ENCODE measurements at regions of chr17 and their contacts with region 1.

Region 1: DNA sequence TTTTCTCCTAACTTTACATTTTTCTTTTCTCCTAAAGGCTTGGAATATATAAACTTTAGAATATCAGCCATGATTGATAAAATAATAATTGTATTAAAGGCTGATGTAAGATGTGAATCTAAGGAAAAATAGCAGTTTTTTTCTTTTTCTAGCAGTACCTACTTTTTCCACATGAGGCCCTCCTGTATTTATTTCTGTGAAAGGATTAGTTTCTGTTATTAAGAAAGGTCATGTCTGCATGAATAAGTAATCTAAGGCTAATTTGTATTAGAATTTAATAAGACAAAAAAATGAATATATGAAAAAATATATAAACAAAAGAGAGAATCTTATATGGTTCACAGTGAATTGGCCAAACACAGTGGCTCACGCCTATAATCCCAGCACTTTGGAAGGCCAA is 85.3 kb downstream of the STXBP4 start:
- DNase-seq: no peak
- H3K4me3 ChIP-seq: no peak overlapping the region
- H3K27ac ChIP-seq: no peak overlapping the region
- H3K4me1 ChIP-seq: no peaks in the 10 kb centered on the region
- H3K27me3 ChIP-seq: no peaks in the 10 kb centered on the region
- CTCF ChIP-seq: peak in 1 of 3 donors; percentile 7
- EP300 ChIP-seq: no peak
- POLR2A ChIP-seq: no peak

Region 2: DNA sequence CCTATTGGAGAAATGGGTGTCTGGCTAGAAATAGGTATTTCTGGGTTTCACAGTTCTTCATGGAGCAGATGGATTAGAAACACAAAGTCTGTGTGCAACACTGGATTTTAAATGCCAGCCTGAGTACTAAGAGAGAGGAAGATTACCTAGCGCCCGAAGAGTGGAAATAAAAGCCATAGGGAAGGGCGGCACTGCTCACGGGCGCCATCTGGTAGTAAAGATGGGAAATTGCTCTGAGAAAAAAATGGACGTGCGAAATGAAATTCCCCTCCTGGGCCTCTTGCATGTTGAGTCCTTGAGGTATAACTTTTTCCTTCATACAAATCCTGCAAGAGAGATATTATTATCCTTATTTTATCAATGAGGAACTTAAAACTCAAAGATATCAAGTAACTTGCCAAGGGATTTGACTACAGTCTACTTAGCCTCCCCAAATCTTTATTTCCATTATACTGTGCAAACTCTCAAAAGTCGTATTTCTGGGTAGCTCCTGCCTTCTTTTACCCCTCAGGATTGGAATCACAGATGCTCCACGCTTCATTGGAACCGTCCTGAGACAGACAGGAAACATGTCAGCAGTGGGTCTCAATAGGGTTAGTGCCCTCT is 295.0 kb after region 1 on chr17:
- intact Hi-C with region 1: loop called in 1 of 4 experiments (anchors 10 kb)
- DNase-seq: peak; percentile 38 to 63 (median 43)
- H3K4me3 ChIP-seq: no peak overlapping the region
- H3K27ac ChIP-seq: no peak overlapping the region
- H3K4me1 ChIP-seq: no peaks in the 10 kb centered on the region
- H3K27me3 ChIP-seq: no peaks in the 10 kb centered on the region
- CTCF ChIP-seq: peak; percentile 71 to 80 (median 73)
- EP300 ChIP-seq: no peak
- POLR2A ChIP-seq: no peak

Measured in ovary (tissue), 10 donors.